HEK293 (cell line): ENCODE measurements at regions of chr9 and their contacts with region 1.

Region 1: DNA sequence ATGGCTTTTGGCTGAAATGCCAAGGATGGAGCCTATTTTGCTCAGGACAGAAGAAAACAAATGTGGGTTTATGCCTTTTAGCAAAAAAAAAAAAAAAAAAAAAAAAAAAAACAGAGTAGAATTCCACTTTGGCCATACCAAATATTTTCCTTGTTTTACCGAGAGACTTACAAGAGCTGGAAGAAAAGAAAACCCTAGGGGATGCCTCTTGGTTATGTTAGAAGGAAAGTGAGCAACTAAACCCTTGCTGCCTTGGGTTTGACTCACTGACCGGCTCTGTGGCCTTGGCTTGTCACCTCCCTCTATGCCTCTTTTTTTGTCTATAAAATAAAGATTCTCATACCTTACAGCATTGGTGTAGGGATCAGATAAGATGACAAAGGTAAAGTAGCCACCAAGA is 69.6 kb upstream of the ABCA1 start:
- H3K4me3 ChIP-seq: no peak overlapping the region
- H3K27ac ChIP-seq: no peak overlapping the region
- H3K4me1 ChIP-seq: no peaks in the 10 kb centered on the region
- CTCF ChIP-seq: no peak

Region 2: DNA sequence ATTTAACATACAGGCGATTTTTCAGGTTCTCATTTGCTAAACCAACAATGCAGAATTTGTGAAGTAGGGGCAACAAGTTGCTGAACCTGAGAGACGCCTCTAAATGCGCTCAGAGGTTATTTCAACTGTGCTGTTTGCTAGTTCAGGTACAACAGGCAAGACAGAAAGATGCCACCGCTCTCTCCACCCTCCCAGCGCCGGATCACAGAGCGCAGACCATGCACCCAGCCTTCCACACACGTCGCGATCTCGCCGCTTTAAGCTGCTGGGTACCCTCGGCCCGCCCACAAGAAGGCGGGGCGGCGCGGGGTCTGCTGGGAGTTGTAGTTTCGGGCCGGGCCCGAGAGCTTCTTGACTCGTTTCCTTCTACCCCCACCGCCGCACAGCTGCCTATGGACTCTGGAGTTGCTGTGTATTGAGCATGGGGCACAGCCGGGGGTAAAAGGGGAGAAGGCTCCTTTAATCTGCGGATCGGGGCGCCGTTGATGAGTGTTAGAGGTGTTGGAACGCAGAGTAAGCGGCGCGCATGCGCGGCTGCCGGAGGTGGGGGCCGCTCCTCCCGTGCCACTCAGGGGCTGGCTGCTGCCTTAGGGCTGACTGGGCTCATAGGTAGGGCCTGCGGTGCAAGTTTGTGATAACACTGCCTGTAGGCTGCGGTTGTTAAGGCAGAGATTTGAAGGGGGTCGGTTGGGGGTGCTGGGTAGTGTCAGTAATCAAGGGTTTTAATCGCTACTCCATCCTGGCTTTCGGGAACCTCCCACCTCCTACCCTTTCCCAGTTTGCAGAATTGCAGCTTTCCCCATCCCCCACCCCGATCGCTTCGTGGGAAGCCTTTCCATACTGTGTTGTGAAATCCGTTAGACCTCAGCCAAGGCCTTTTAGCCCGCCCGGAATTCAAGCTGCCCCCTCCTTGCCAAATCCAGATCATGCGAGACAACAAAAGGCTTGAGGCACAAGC is 29.2 kb before region 1 on chr9:
- CTCF ChIA-PET with region 1: no interaction called
- POLR2A ChIA-PET with region 1: interaction called, 11 read pairs
- H3K4me3 ChIP-seq: peak overlapping the region; percentile 71
- H3K27ac ChIP-seq: peak overlapping the region; percentile 87
- H3K4me1 ChIP-seq: no peaks in the 10 kb centered on the region
- CTCF ChIP-seq: no peak